HCT116 (cell line): ENCODE measurements at regions of chr7 and their contacts with region 1.

Region 1: DNA sequence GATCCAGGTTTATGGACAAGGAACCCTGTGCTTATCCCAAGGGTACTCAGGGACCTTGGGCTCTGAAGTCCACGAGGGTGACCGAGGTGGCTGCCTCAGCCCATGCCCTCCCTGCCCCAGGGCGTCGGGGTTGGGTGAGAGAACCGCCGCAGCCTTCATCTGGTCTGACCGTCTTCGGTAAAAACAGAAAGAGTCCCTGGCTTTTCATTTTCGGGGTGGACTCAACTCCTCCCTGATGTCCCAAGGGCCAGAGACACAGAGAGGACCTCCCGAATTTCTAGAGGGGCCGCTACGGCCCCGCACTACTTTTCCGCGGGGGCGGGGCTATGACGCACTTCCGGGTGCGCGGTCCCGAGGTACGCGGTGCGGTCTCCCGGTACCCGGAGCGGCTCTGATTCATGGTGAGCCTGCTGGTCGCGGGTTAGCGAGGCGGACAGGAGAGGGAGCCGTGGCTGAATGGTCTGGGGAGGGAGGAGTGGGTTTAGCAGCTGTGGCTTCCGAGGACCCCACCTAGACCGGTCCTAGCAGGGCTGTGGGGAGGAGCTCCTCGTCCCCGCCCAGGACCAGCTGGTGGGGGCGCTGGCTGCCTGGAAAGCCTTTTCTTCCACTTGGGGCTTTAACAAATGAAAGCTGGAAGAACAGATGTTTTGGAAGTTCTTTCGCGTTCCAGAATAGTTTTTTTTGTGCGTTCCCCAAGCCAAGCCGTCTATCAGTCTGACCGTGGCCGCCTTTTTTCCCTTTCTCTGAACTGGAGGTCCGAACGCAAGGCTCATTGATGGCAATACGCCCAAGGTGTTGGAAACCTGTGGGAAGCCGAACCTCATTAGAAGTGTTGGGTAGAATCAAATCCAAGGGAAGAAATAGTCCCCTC is at the start of gene ZSCAN21:
- DNase-seq: peak; percentile 38
- ATAC-seq: peak; percentile 90
- H3K4me3 ChIP-seq: peak within 1 kb of the TSS; percentile 78 to 82
- H3K27ac ChIP-seq: peak within 1 kb of the TSS; percentile 77
- H3K4me1 ChIP-seq: peaks cover 10 to 16% of the 10 kb centered on the region in 2 experiments; a peak in 2 of 4 replicates
- H3K27me3 ChIP-seq: no peaks in the 10 kb centered on the region
- CTCF ChIP-seq: 0 out of 6 replicates have a peak, but pooled peaks of 1 of the 3 experiments have one; percentile 16
- POLR2A ChIP-seq: peak; percentile 54
- RAD21 ChIP-seq: peak; percentile 28; the same call in 1 of the 2 replicates
- total RNA-seq, gene ZSCAN21: 10.3 TPM

Region 2: DNA sequence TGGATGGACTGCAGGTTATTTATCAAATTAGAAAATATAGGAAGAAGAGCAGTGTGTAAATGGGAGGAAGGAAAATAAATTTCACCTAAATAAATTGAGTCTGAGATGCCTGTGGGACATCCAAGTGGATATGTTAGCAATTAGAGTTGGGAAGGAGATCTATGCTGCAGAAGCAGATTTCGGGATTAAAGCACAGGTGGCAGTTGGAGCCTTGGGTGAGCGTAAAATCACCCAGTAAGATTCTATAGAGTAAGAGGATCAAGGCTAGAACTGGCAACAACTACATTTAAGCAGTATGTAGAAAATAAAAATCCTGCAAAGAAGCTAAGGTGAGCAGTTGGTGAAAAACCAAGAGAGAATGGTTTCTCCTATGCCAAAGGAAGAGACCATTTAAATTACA is 138.7 kb before region 1 on chr7:
- CTCF ChIA-PET with region 1: interaction called, 5 read pairs
- POLR2A ChIA-PET with region 1: no interaction called
- RAD21 ChIA-PET with region 1: interaction called in 1 of 2 experiments, 3 read pairs
- intact Hi-C with region 1: loop called (anchors 2 kb)
- DNase-seq: no peak
- ATAC-seq: no peak
- H3K4me3 ChIP-seq: no peak overlapping the region
- H3K27ac ChIP-seq: no peak overlapping the region
- H3K4me1 ChIP-seq: no peaks in the 10 kb centered on the region
- H3K27me3 ChIP-seq: no peaks in the 10 kb centered on the region
- CTCF ChIP-seq: no peak
- POLR2A ChIP-seq: no peak
- RAD21 ChIP-seq: no peak